Heart left ventricle (tissue), 16 donors: ENCODE measurements at regions of chr2 and their contacts with region 1.

Region 1: DNA sequence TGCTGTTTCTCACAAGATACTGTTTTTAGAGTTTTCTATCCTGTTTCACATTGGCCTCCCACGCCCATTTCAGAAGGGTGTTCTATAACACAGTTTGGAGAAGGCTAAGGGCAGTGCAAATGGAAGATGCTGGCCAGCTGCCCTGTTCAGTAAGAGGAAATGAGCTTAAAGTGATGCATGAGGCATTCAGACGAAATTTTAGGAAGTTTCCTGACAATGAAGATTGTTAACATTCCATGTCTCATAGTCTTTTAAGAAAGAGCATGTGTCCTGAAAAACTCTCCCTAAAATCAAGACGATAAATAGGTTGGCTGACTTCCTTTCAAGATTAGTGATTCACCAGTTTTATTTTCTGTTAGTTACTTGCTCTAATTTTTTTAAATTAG is 484.2 kb upstream of the NRP2 start:
- DNase-seq: peak in 4 of 5 donors; percentile 53 to 72 (median 64)
- ATAC-seq: peak in 3 of 4 donors; percentile 76 to 93 (median 91)
- H3K4me3 ChIP-seq: no peak overlapping the region
- H3K27ac ChIP-seq: peak overlapping the region in 7 of 12 donors; percentile 9 to 45 (median 31)
- H3K4me1 ChIP-seq: peaks cover 0 to 12% (median 0%) of the 10 kb centered on the region in 12 donors
- H3K27me3 ChIP-seq: no peaks in the 10 kb centered on the region
- CTCF ChIP-seq: no peak
- POLR2A ChIP-seq: no peak

Region 2: DNA sequence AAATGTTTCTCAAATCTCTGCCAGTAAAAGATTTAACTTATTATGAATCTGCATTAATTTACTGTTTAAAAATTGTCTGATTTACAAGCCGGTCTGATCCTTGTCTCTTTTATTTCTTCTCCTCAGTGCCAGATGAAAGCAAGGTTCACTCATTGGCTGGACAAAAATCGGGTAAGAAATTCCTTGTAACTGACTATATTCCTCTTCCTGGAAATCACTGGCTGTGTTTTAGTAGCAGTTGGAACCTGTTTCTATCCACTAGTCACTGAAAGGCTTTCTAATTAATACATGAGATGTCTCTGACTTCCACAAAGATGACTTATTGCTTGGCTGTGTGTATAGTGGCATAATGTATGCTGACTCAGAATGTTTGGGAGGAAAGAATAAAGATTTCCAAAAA is 47.5 kb after region 1 on chr2:
- intact Hi-C with region 1: no loop called
- DNase-seq: no peak
- ATAC-seq: peak in 2 of 4 donors; percentile 76 to 84
- H3K4me3 ChIP-seq: no peak overlapping the region
- H3K27ac ChIP-seq: peak overlapping the region in 2 of 12 donors; percentile 20 to 40
- H3K4me1 ChIP-seq: peaks cover 0 to 3% (median 0%) of the 10 kb centered on the region in 12 donors
- H3K27me3 ChIP-seq: no peaks in the 10 kb centered on the region
- CTCF ChIP-seq: no peak
- POLR2A ChIP-seq: no peak

Region 3: GRCh38 chr2:205405752-205406151 is 207.6 kb after region 1 on chr2:
- intact Hi-C with region 1: loop called in 1 of 10 experiments (anchors 5 kb)
- DNase-seq: no peak
- ATAC-seq: peak; percentile 42 to 77 (median 61)
- H3K4me3 ChIP-seq: no peak overlapping the region
- H3K27ac ChIP-seq: peak overlapping the region in 1 of 12 donors; percentile 3
- H3K4me1 ChIP-seq: peaks cover 0 to 47% (median 4%) of the 10 kb centered on the region in 12 donors
- H3K27me3 ChIP-seq: no peaks in the 10 kb centered on the region
- CTCF ChIP-seq: no peak
- POLR2A ChIP-seq: no peak